Dendritic cell treated with granulocyte-macrophage colony-stimulating factor and Interleukin-4, amounts not matched to agents 40 ng/mL and 50 ng/mL, for 4 days (primary cell): ENCODE measurements at regions of chr10 and their contacts with region 1.

Region 1: GRCh38 chr10:14543046-14543903 is 212.6 kb upstream of the FRMD4A start:
- H3K4me3 Mint-ChIP-seq: peak overlapping the region; percentile 39
- H3K27ac Mint-ChIP-seq: peak overlapping the region; percentile 82
- H3K4me1 Mint-ChIP-seq: peaks cover 44% of the 10 kb centered on the region
- H3K27me3 Mint-ChIP-seq: peaks cover 3% of the 10 kb centered on the region

Region 2: DNA sequence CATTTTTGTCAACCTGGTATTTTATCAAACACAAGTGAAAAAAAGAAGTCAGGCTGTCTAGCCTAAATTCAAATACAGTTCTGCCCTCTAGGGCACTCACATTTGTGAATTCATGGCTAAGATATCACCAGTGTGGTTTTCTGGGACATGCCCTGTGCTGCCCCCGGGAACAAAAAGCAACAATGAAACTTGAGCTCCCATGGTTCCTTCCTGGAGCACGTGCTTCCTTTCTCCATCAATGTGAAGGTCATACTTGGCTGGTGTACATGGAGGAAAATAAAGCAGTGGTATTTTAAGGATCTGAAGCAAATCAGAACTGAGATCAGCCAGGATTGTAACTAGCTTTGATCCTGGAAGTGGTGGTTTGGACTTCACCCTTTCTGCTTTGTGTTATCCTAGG is 83.6 kb before region 1 on chr10:
- intact Hi-C with region 1: no loop called
- H3K4me3 Mint-ChIP-seq: no peak overlapping the region
- H3K27ac Mint-ChIP-seq: no peak overlapping the region
- H3K4me1 Mint-ChIP-seq: no peaks in the 10 kb centered on the region
- H3K27me3 Mint-ChIP-seq: peaks cover 18% of the 10 kb centered on the region

Region 3: DNA sequence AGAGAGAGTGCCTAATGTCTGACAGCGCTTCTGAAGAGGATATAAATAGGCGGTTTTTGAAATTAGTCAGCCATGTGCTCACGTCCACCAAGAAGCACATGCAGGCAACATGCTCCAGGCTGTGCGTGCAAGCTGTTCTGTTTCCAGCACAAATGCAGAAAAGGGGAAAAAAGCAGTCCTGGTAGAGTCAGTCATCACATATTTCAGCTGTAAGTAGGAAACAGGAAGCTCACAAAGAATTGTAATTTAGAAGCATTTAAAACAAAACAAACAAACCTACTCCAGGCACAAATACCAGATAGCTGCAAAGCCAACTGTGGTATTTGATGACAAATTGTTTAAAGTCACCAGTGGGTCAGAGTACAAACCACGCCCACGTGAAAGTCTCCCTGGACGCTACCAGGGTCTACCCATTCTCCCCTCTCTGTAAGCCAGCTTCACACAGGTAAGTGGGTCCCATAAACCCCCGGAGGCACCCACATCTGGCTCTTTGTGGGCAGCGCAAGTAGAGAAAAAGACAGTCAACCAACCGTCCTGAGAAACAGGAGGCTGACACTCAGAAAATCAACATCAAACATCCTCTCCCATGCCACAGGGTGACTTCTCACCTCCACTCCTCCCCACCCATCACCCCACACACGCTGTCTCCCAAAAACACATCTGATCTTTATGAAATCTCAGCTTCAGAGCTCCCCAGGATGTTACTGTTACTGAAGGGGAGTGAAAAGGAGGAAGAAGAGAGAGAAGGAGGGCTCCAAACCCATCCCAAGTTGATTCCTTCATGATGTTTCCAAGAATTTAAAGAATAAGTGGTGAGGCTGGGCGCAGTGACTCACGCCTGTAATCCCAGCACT is 45.0 kb after region 1 on chr10:
- intact Hi-C with region 1: loop called (anchors 5 kb)
- H3K4me3 Mint-ChIP-seq: peak overlapping the region; percentile 30
- H3K27ac Mint-ChIP-seq: peak overlapping the region; percentile 85
- H3K4me1 Mint-ChIP-seq: peaks cover 51% of the 10 kb centered on the region
- H3K27me3 Mint-ChIP-seq: no peaks in the 10 kb centered on the region